Breast epithelium (tissue), 4 donors: ENCODE measurements at regions of chr5 and their contacts with region 1.

Region 1: DNA sequence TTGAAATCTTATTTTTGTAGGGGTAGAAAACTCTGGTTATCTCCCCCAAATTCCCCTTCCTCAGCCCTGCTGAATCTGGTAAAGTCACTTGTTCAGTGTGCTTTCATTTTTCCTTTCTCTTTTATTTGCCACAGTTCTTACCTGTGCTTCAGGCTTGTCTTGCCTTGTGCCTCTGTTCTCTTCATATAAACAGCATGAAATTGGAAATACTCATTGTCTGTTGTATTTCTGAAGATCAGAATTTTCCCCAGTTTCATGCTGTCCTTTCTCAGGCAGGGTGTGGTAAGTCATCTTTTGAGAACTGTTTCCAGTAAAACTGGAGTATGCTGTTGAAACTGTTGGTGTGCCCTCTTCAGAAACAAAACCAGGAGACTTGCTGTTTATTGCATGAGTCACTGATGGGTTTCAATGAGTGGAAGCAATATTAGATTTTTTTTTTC is 7.0 kb downstream of the PAM start:
- DNase-seq: no peak
- H3K4me3 ChIP-seq: no peak overlapping the region
- H3K27ac ChIP-seq: peak overlapping the region in 1 of 2 donors; percentile 17
- H3K4me1 ChIP-seq: peaks cover 0 to 9% of the 10 kb centered on the region in 2 donors
- H3K27me3 ChIP-seq: no peaks in the 10 kb centered on the region
- CTCF ChIP-seq: no peak
- POLR2A ChIP-seq: no peak

Region 2: DNA sequence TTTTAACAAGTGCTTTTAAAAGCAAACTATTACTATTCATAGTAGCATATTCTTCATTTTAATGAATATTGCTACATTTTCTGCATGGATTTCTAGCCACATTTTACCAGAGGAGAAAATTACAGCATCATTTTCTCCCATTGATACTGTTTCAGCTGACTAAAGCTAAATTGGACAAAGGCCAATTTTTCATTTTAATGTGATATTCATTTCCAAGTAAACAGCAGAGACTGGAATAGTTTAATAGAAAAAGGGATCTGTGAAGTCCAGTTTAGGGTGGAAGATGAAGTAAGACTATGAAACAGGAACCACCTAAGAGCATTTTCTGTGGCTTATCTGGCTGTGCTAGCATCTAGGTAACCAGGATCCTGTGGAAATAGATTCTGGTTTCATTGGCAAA is 229.7 kb after region 1 on chr5:
- intact Hi-C with region 1: no loop called
- DNase-seq: no peak
- H3K4me3 ChIP-seq: no peak overlapping the region
- H3K27ac ChIP-seq: no peak overlapping the region
- H3K4me1 ChIP-seq: no peaks in the 10 kb centered on the region
- H3K27me3 ChIP-seq: no peaks in the 10 kb centered on the region
- CTCF ChIP-seq: no peak
- POLR2A ChIP-seq: no peak

Region 3: DNA sequence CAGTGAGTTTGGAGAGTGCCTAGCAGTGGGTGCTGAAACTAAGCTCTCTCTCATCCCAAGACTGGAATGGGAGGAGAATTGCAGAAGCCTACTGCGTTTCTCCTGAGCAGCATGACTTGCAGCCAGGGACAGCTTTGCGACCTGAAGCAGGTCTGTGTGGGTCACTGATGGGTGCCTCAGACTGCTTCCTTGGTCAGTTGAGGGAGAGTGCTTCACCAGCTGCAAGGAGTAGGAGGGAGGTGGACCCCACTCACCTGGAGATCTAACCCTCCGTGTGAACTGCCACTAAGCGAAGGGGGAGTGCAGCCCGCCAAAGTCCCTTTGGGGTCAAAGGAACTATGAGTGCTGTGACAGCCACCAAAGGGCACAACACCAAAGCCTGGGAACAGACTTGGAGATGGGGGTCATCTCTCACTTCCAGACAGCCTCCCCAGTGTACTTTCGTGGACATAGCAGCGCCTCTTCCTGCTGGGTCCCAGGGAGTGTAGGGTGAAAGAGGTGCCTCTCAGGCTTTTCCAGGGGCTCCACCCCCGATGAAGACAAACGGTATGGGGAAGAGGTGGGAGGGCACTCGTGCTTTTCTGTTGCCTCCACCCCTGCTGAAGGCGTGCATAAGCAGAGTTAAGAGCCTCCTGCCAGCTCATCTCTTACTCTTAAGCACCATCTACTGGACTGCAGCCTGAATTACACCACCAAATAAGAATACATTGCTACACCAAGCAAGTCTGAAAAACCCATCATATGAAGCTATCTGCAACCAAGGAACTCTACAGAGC is 462.2 kb after region 1 on chr5:
- intact Hi-C with region 1: loop called (anchors 5 kb)
- DNase-seq: no peak
- H3K4me3 ChIP-seq: no peak overlapping the region
- H3K27ac ChIP-seq: no peak overlapping the region
- H3K4me1 ChIP-seq: no peaks in the 10 kb centered on the region
- H3K27me3 ChIP-seq: no peaks in the 10 kb centered on the region
- CTCF ChIP-seq: peak in 2 of 3 donors; percentile 41 to 51
- POLR2A ChIP-seq: no peak